Common myeloid progenitor, CD34-positive (primary cell): ENCODE measurements at regions of chr2 and their contacts with region 1.

Region 1: GRCh38 chr2:223944703-223945531 is at the start of gene WDFY1:
- DNase-seq: peak; percentile 84 to 92 (median 87)
- H3K4me3 ChIP-seq: peak within 1 kb of the TSS; percentile 77 to 90 (median 86)
- H3K27ac ChIP-seq: peak within 1 kb of the TSS in 1 of 2 experiments; percentile 68
- H3K4me1 ChIP-seq: peaks cover 0 to 15% (median 10%) of the 10 kb centered on the region in 4 experiments
- H3K27me3 ChIP-seq: no peaks in the 10 kb centered on the region

Region 2: GRCh38 chr2:223896833-223897311 is 48.0 kb before region 1 on chr2:
- CTCF ChIA-PET with region 1: no interaction called
- POLR2A ChIA-PET with region 1: no interaction called
- DNase-seq: peak; percentile 15 to 41 (median 23)
- H3K4me3 ChIP-seq: no peak overlapping the region
- H3K27ac ChIP-seq: no peak overlapping the region
- H3K4me1 ChIP-seq: peaks cover 0 to 4% (median 0%) of the 10 kb centered on the region in 4 experiments
- H3K27me3 ChIP-seq: no peaks in the 10 kb centered on the region

Region 3: GRCh38 chr2:223957092-223957851 is 12.4 kb after region 1 on chr2 and contains the start of gene MRPL44:
- CTCF ChIA-PET with region 1: interaction called, 17 read pairs
- POLR2A ChIA-PET with region 1: interaction called, 4 read pairs
- DNase-seq: peak; percentile 94 to 97 (median 95)
- H3K4me3 ChIP-seq: peak within 1 kb of the TSS; percentile 93 to 99 (median 97)
- H3K27ac ChIP-seq: peak within 1 kb of the TSS; percentile 69 to 86
- H3K4me1 ChIP-seq: peaks cover 28 to 49% (median 36%) of the 10 kb centered on the region in 4 experiments
- H3K27me3 ChIP-seq: no peaks in the 10 kb centered on the region

Region 4: DNA sequence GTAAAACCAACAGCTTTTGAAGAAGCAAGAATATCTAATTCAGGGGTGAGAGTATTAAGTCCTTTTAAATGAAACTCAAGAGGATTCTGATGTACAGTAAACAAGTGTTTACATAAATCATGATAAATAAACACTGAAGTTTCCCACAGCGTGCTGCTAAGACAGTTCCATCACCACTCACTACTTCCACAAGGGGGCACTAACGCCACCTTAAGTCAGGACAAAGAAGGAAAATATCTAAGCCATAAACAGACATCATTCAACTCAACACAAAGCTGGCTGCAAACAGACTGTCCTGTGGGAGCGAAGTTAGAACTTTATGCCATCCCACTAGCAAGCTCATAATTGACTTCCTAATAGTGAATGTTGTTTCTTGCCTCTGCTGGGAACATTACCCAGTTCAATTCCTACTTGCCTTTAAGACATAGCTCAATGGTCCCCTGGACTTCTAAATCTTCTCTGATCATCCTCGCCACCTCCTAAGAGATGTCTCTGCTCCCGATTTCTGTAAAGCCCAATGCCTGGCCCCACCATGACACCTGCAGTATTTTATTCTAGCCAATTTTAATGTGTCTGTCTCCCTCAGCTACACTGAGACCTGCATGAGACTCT is 48.8 kb after region 1 on chr2:
- CTCF ChIA-PET with region 1: no interaction called
- POLR2A ChIA-PET with region 1: no interaction called
- DNase-seq: peak; percentile 81 to 89 (median 82)
- H3K4me3 ChIP-seq: no peak overlapping the region
- H3K27ac ChIP-seq: no peak overlapping the region
- H3K4me1 ChIP-seq: peaks cover 0 to 2% (median 0%) of the 10 kb centered on the region in 4 experiments
- H3K27me3 ChIP-seq: no peaks in the 10 kb centered on the region